Gastrocnemius medialis (tissue), 4 donors: ENCODE measurements at regions of chr20 and their contacts with region 1.

Region 1: DNA sequence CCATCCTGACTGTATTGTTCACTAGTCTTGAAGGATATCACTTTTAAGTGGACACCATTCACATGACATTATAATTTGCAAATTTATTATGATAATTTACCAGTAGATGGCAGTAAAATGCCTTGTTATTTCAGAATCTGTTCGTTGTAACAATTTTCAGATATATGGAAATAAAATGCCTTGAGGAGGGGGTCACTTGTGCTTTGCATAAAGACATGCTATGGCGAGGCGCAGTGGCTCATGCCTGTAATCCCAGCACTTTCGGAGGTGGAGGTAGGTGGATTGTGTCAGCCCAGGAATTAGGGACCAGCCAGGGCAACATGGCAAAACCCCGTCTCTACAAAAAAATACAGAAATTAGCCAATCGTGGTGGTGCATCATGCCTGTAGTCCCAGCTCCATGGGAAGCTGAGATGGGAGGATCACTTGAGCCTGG is 9.0 kb upstream of the NCOA6 start:
- DNase-seq: no peak
- ATAC-seq: peak in 1 of 2 donors; percentile 52
- H3K4me3 ChIP-seq: no peak overlapping the region
- H3K27ac ChIP-seq: no peak overlapping the region
- H3K4me1 ChIP-seq: peaks cover 0 to 5% of the 10 kb centered on the region in 2 donors
- H3K27me3 ChIP-seq: no peaks in the 10 kb centered on the region
- CTCF ChIP-seq: peak; percentile 38 to 53 (median 49)
- POLR2A ChIP-seq: no peak

Region 2: GRCh38 chr20:34955232-34956040 is 121.0 kb after region 1 on chr20 and contains the starts of genes GSS and MYH7B:
- in situ Hi-C with region 1: no loop called
- intact Hi-C with region 1: loop called (anchors 2 kb)
- DNase-seq: peak; percentile 94 to 97
- ATAC-seq: peak; percentile 80 to 88
- H3K4me3 ChIP-seq: peak within 1 kb of the TSS; percentile 58 to 97 (median 80)
- H3K27ac ChIP-seq: peak within 1 kb of the TSS; percentile 83 to 98 (median 91)
- H3K4me1 ChIP-seq: peaks cover 27 to 53% of the 10 kb centered on the region in 2 donors
- H3K27me3 ChIP-seq: no peaks in the 10 kb centered on the region
- CTCF ChIP-seq: peak; percentile 53 to 74 (median 64)
- POLR2A ChIP-seq: peak; percentile 79 to 91
- total RNA-seq, gene GSS: 14.1 to 33.0 (median 23.8) TPM
- total RNA-seq, gene MYH7B: 1.6 to 8.5 (median 3.3) TPM

Region 3: DNA sequence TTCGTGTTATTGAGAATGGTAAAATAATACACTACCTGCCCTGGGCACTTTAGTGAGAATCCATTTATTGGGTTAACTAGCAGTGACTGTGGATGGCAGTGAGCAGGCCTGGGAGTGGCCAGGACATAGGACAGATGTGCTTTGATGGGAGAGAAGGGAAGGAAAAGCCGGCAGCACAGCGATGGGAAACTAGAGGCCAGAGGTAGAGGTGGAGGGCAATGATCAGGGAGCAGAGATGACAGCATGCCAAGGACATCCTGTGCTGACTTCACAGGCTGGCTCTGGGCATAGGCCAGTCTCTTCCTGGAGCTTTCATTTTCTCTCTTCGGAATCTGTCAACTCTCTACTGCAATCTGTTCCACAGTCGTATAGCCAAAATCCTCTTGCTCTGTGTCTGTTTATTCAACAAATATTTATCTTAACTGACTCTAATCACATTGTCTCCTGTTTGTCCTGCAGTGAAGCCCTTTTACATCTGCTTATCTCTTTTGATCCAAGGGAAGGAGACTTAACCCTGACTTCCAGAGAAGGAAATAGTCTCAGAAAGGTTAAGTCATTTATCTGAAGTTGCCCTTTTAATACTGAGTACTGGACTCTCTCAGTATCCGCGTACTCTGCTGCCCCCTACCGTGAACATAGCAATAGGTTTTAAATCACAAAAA is 373.6 kb after region 1 on chr20:
- in situ Hi-C with region 1: loop called in 2 of 4 experiments (anchors 10 to 25 kb)
- intact Hi-C with region 1: loop called (anchors 2 kb)
- DNase-seq: peak; percentile 53 to 67
- ATAC-seq: peak; percentile 90 to 95
- H3K4me3 ChIP-seq: peak overlapping the region in 3 of 4 donors; percentile 1 to 37 (median 23)
- H3K27ac ChIP-seq: peak overlapping the region; percentile 55 to 77 (median 60)
- H3K4me1 ChIP-seq: no peaks in the 10 kb centered on the region
- H3K27me3 ChIP-seq: no peaks in the 10 kb centered on the region
- CTCF ChIP-seq: peak; percentile 77 to 85 (median 81)
- POLR2A ChIP-seq: no peak

Region 4: GRCh38 chr20:35215066-35215956 is 380.8 kb after region 1 on chr20:
- in situ Hi-C with region 1: loop called in 2 of 4 experiments (anchors 10 to 25 kb)
- intact Hi-C with region 1: no loop called
- DNase-seq: no peak
- ATAC-seq: no peak
- H3K4me3 ChIP-seq: no peak overlapping the region
- H3K27ac ChIP-seq: no peak overlapping the region
- H3K4me1 ChIP-seq: no peaks in the 10 kb centered on the region
- H3K27me3 ChIP-seq: no peaks in the 10 kb centered on the region
- CTCF ChIP-seq: no peak
- POLR2A ChIP-seq: no peak